ENCODE measurements at regions of chrX and their contacts with region 1.

Region 1: DNA sequence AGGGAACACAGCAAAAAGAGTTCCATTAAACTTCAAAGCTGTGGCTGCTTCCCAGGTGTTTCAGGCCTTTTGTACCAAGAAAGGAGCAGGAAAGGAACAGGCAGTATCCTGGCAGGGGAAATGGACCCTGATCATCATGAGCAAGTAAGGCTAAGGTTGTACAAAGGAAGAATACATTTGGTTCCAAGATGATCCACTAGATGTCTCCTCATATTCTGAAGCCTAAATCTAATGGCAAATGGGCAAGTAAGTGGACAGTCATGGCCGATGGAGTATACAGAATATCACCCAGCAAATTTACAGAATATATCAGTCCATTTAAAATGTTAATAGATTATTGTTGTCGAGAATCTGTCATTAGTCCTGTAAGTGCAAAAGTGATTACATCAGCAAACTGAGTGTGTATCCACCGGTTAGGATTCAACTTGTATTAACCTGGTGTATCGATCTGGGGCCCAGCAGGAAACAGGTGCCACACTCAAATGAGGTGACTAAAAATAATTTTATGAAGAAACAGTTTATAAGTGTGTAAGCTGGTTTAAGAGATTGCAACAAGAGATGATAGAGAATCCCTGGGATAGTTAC is 368.0 kb upstream of the FAM47C start:
- DNase-seq: no peak
- ATAC-seq: no peak
- H3K4me3 ChIP-seq: no peak overlapping the region
- H3K27ac ChIP-seq: no peak overlapping the region
- H3K4me1 ChIP-seq: no peaks in the 10 kb centered on the region
- H3K27me3 ChIP-seq: peaks cover 0 to 3% (median 0%) of the 10 kb centered on the region in 9 donors
- CTCF ChIP-seq: peak in 2 of 12 donors; percentile 3 to 6
- POLR2A ChIP-seq: no peak

Region 2: GRCh38 chrX:36573720-36574119 is 66.4 kb before region 1 on chrX:
- intact Hi-C with region 1: loop called in 1 of 10 experiments (anchors 10 kb)
- DNase-seq: no peak
- ATAC-seq: no peak
- H3K4me3 ChIP-seq: no peak overlapping the region
- H3K27ac ChIP-seq: no peak overlapping the region
- H3K4me1 ChIP-seq: no peaks in the 10 kb centered on the region
- H3K27me3 ChIP-seq: peaks cover 0 to 4% (median 0%) of the 10 kb centered on the region in 9 donors
- CTCF ChIP-seq: no peak
- POLR2A ChIP-seq: no peak